Activated naive CD4-positive, alpha-beta T cell treated with anti-CD3 and anti-CD28 coated beads for 36 hours (primary cell): ENCODE measurements at regions of chr9 and their contacts with region 1.

Region 1: GRCh38 chr9:109574068-109574882 is 76.2 kb upstream of the PTPN3 start:
- DNase-seq: peak; percentile 50
- H3K4me3 Mint-ChIP-seq: no peak overlapping the region
- H3K27ac Mint-ChIP-seq: no peak overlapping the region
- H3K4me1 Mint-ChIP-seq: no peaks in the 10 kb centered on the region
- H3K27me3 Mint-ChIP-seq: peaks cover 7% of the 10 kb centered on the region

Region 2: DNA sequence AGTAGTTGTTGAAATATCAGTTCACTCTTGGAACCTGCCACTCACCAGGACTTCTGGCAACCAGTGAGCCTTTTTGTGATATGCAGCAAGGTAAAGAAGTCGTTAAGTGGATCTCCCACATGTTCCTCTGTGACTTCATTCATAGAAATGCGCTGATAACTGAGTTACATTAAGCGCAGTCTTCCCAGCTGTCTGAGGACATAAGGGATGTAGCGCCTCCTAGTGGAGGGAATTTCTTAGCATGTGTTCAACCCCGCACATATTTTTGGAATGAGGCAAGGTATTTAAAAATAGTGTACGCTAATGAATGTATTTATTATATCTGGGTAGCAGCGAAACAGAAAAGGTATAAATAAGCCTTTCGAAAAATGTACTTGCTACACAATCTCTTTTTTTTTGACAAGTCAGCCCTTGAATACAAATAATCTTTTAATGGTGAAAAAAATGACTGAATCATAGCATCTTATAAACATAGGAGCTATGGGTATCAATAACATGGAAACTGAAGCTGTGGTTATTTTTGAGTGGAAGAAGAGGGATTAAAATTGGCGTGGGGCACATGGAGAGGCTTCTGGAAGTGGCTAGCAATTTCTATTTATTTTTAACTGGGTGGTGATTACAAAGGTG is 243.7 kb after region 1 on chr9:
- CTCF ChIA-PET with region 1: interaction called, 32 read pairs
- intact Hi-C with region 1: loop called (anchors 1 kb)
- DNase-seq: peak; percentile 72
- H3K4me3 Mint-ChIP-seq: no peak overlapping the region
- H3K27ac Mint-ChIP-seq: no peak overlapping the region
- H3K4me1 Mint-ChIP-seq: no peaks in the 10 kb centered on the region
- H3K27me3 Mint-ChIP-seq: peaks cover 13% of the 10 kb centered on the region

Region 3: DNA sequence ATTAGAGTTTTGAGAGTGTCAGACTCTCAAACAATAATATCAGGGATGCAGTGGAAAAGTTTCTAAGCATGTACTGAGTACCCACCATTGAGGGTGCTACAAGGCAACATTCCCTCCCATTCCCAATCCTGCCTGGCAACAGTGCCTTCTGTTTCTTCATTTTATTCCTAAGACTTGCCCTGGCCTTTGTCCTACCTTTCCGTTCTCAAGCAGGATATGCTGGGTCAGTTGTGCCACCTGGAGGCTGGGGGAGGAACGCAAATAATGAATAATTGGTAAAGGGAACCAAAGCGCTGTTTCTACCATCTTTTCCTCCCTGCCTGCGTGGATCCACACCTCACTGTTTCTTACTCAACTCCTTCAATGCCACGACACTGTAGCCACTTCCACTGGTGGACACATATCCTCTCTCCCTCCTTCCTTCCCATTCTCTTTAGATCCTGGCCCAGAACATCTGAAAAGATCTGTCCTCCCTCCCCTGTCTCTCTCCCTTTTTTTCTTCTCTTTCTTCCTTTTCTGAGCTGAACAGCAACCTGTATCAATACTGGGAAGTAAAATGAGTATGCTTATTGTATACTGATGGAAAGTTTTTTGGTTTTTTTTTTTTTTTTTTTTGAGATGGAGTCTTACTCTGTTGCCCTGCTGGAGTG is 484.2 kb after region 1 on chr9:
- CTCF ChIA-PET with region 1: no interaction called
- intact Hi-C with region 1: loop called (anchors 1 kb)
- DNase-seq: peak; percentile 74
- H3K4me3 Mint-ChIP-seq: no peak overlapping the region
- H3K27ac Mint-ChIP-seq: no peak overlapping the region
- H3K4me1 Mint-ChIP-seq: peaks cover 9% of the 10 kb centered on the region
- H3K27me3 Mint-ChIP-seq: peaks cover 2% of the 10 kb centered on the region

Region 4: DNA sequence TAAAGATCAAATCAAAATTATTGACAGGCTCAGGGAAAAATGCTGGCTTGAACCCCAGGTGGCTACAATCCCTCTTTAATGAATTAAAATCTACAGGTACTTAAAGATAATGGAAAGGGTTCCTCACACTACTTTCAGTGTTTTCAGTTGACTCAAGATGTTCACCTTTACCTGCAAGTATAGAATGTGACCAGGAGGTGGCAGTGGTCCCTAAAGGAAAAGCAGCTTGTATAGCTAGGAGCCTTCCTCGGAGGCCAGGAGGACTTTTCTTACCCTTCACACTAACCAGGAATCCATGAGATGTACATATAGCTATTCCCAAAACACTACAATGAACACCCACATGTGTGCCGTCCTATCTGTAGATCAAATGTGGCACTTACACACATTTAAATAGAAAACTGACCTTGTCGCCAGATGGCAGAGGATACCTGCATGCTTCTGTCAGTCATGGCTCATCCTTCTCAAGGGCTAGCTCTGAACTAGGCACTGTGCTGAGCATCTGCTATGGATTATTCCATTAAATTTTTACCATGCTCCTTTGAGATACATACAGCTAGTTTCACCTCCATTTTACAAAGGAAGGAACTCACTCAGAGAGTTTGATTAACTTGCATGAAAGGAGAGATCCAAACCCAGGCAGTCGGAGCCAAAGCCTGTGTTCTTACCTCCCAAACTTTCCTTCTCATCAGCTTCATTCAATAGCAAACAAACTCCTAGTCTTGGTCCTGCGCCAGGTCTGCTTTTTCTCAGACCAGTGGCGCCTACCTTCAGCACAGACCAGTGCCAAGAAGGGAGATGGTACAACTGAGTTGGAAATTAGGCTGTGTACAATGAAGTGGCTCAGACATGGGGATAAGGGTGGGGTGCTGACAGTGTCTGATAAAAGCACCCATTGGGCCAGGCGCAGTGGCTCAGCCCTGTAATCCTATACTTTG is 609.2 kb after region 1 on chr9:
- CTCF ChIA-PET with region 1: no interaction called
- intact Hi-C with region 1: loop called (anchors 10 kb)
- DNase-seq: peak; percentile 82
- H3K4me3 Mint-ChIP-seq: no peak overlapping the region
- H3K27ac Mint-ChIP-seq: no peak overlapping the region
- H3K4me1 Mint-ChIP-seq: no peaks in the 10 kb centered on the region
- H3K27me3 Mint-ChIP-seq: no peaks in the 10 kb centered on the region

Region 5: DNA sequence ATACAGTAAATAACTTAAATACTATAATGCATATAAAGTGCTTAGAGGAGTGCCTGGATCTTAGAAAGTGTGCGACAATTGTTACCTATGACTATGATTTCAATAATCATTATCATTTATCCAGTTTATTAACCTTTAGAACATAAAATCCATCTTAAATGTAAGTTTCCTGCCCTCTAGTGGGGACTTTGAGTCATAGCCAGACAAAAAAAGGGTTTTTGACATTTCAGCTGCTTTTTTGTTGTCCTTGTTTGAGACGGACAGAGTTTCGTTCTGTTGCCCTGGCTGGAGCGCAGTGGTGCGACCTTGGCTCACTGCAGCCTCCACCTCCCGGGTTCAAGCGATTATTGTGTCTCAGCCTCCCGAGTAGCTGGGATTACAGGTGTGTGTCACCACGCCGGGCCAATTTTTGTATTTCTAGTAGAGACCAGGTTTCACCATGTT is 643.4 kb after region 1 on chr9:
- CTCF ChIA-PET with region 1: interaction called, 3 read pairs
- intact Hi-C with region 1: loop called (anchors 1 kb)
- DNase-seq: no peak
- H3K4me3 Mint-ChIP-seq: no peak overlapping the region
- H3K27ac Mint-ChIP-seq: no peak overlapping the region
- H3K4me1 Mint-ChIP-seq: no peaks in the 10 kb centered on the region
- H3K27me3 Mint-ChIP-seq: no peaks in the 10 kb centered on the region